ENCODE measurements at regions of chr9 and their contacts with region 1.

Region 1: DNA sequence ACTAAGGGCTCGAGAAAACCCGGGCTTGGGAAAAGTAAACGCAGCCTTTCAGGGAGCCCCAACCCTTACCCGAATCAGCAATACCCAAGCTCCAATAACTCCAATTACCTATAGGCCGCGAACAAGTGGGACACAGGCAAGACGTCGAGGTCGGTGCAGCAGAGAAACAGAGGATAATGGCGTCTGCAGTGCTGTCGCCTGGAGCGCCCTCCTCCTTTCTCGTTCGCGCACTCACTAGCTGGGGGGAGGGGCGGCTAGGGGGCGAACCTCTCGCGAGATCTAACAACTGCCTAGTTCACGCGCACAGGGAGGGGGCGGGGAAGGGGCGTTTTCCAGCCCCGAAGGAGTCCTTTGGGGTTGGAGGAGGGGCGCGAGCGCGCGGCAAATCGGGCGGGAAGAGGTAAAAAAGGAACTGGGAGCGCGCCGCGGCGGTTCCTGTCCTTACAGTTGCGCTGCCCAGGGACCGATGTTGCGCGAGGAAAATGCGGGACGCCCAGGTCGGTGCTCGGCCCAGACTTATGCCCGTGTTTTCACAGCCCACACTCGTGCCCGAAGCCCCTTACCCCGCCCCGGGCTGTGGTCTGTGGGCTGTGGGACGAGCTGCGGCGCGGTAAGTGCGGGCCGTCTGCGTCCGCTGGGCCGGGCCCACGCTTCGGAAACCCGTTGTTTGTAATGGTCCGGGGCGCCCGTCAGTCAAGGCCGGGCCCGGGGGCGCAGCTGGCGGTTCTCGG is at the start of gene RMI1:
- DNase-seq: peak; percentile 91 to 99
- ATAC-seq: peak; percentile 82 to 85
- H3K4me3 ChIP-seq: peak within 1 kb of the TSS; percentile 94
- H3K27ac ChIP-seq: peak within 1 kb of the TSS; percentile 100
- H3K4me1 ChIP-seq: peaks cover 37% of the 10 kb centered on the region
- CTCF ChIP-seq: no peak
- EP300 ChIP-seq: no peak
- POLR2A ChIP-seq: peak; percentile 67
- RAD21 ChIP-seq: no peak
- polyA plus RNA-seq, gene RMI1: 7.4 and 14.0 TPM in 2 replicates

Region 2: GRCh38 chr9:83920927-83921707 is 59.4 kb before region 1 on chr9 and contains the start of gene KIF27:
- CTCF ChIA-PET with region 1: no interaction called
- POLR2A ChIA-PET with region 1: interaction called, 13 read pairs
- DNase-seq: peak; percentile 88 to 98
- ATAC-seq: peak; percentile 90 to 97
- H3K4me3 ChIP-seq: peak within 1 kb of the TSS; percentile 81
- H3K27ac ChIP-seq: peak within 1 kb of the TSS; percentile 93 to 97
- H3K4me1 ChIP-seq: peaks cover 7% of the 10 kb centered on the region; the same call in 2 of the 3 replicates
- CTCF ChIP-seq: peak; percentile 50
- EP300 ChIP-seq: no peak
- POLR2A ChIP-seq: peak; percentile 85
- RAD21 ChIP-seq: no peak; a peak in 3 of 5 replicates
- polyA plus RNA-seq, gene KIF27: 4.1 and 6.0 TPM in 2 replicates

Region 3: GRCh38 chr9:83956434-83957247 is 23.9 kb before region 1 on chr9:
- CTCF ChIA-PET with region 1: interaction called, 8 read pairs
- POLR2A ChIA-PET with region 1: interaction called, 11 read pairs
- DNase-seq: peak; percentile 82 to 85
- ATAC-seq: peak; percentile 94 to 95
- H3K4me3 ChIP-seq: peak overlapping the region; percentile 52
- H3K27ac ChIP-seq: peak overlapping the region; percentile 94 to 95
- H3K4me1 ChIP-seq: peaks cover 26% of the 10 kb centered on the region; the same call in 2 of the 3 replicates
- CTCF ChIP-seq: no peak
- EP300 ChIP-seq: no peak
- POLR2A ChIP-seq: peak; percentile 57
- RAD21 ChIP-seq: no peak

Region 4: GRCh38 chr9:83964973-83965349 is 15.6 kb before region 1 on chr9:
- CTCF ChIA-PET with region 1: interaction called, 8 read pairs
- POLR2A ChIA-PET with region 1: interaction called, 29 read pairs
- DNase-seq: no peak
- ATAC-seq: peak; percentile 52 to 58
- H3K4me3 ChIP-seq: no peak overlapping the region
- H3K27ac ChIP-seq: peak overlapping the region; percentile 72 to 78
- H3K4me1 ChIP-seq: peaks cover 36% of the 10 kb centered on the region
- CTCF ChIP-seq: no peak
- EP300 ChIP-seq: no peak
- POLR2A ChIP-seq: no peak
- RAD21 ChIP-seq: no peak

Region 5: GRCh38 chr9:84054341-84055010 is 73.9 kb after region 1 on chr9:
- CTCF ChIA-PET with region 1: no interaction called
- POLR2A ChIA-PET with region 1: no interaction called
- DNase-seq: no peak
- ATAC-seq: no peak
- H3K4me3 ChIP-seq: no peak overlapping the region
- H3K27ac ChIP-seq: no peak overlapping the region
- H3K4me1 ChIP-seq: no peaks in the 10 kb centered on the region
- CTCF ChIP-seq: no peak
- EP300 ChIP-seq: no peak
- POLR2A ChIP-seq: no peak
- RAD21 ChIP-seq: no peak

Measured in A549 (cell line).